ENCODE measurements at regions of chr1 and their contacts with region 1.

Region 1: DNA sequence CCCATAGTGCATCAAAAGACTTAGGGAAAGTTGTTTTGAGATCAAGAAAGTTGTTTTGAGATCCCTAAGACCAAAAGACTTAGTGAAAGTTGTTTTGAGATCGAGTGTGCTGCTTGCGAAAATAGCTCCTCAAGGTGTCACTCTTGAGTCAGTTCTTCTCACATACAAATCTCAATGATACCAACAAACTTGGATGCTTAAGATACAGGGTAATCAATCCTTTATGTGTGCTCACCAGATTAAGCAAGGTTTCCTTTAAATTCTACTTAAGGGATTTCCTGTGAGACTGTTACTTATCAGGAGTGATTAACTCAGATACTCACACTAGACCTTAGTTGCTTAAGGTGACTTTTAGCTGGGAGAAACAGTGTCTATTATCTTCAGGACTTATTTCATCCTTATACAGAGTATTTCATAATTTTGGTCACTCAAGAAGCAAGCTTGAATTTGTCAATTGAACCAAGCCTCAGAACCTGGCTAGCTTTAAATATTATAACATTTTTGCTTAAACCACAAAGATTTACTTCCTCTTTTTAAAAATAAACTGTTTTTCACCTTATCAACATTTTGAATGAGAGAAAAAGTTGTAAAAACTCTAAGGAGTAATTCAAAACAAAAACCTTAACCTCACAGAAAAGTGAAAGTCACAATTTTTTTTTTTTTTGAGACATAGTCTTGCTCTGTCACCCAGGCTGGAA is 8.0 kb upstream of the RLF start:
- DNase-seq: peak; percentile 35
- CTCF ChIP-seq: peak; percentile 74

Region 2: GRCh38 chr1:40171036-40171435 is 17.8 kb after region 1 on chr1:
- CTCF ChIA-PET with region 1: interaction called, 15 read pairs
- POLR2A ChIA-PET with region 1: no interaction called
- DNase-seq: no peak
- CTCF ChIP-seq: no peak

Region 3: GRCh38 chr1:40185951-40186864 is 33.0 kb after region 1 on chr1:
- CTCF ChIA-PET with region 1: interaction called, 27 read pairs
- POLR2A ChIA-PET with region 1: no interaction called
- DNase-seq: peak; percentile 76
- CTCF ChIP-seq: no peak

Region 4: GRCh38 chr1:40210514-40211204 is 57.4 kb after region 1 on chr1:
- CTCF ChIA-PET with region 1: interaction called, 10 read pairs
- POLR2A ChIA-PET with region 1: interaction called, 4 read pairs
- DNase-seq: no peak
- CTCF ChIP-seq: no peak

Region 5: DNA sequence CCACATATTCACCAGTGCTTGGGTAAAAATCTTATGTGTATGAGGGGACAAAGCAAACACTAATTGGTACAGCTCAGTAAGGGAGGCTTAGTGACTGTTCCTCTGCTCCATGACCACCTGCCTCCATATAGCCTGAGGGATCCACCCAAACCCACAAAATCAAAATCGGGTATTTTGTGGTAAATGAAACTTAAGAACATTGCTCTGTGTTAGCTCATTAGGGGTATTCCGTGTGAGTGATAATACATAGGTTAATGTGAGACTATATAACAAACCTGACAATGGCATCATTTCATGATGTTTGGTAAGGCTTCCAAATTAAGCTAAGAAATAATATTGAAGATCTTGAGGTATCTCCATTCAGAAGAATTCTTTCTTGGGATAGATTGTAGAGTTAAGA is 138.1 kb after region 1 on chr1:
- CTCF ChIA-PET with region 1: interaction called, 14 read pairs
- POLR2A ChIA-PET with region 1: interaction called, 3 read pairs
- DNase-seq: no peak
- CTCF ChIP-seq: no peak

Region 6: GRCh38 chr1:40352126-40352525 is 198.9 kb after region 1 on chr1:
- CTCF ChIA-PET with region 1: interaction called, 13 read pairs
- POLR2A ChIA-PET with region 1: no interaction called
- DNase-seq: peak; percentile 52
- CTCF ChIP-seq: no peak

Region 7: DNA sequence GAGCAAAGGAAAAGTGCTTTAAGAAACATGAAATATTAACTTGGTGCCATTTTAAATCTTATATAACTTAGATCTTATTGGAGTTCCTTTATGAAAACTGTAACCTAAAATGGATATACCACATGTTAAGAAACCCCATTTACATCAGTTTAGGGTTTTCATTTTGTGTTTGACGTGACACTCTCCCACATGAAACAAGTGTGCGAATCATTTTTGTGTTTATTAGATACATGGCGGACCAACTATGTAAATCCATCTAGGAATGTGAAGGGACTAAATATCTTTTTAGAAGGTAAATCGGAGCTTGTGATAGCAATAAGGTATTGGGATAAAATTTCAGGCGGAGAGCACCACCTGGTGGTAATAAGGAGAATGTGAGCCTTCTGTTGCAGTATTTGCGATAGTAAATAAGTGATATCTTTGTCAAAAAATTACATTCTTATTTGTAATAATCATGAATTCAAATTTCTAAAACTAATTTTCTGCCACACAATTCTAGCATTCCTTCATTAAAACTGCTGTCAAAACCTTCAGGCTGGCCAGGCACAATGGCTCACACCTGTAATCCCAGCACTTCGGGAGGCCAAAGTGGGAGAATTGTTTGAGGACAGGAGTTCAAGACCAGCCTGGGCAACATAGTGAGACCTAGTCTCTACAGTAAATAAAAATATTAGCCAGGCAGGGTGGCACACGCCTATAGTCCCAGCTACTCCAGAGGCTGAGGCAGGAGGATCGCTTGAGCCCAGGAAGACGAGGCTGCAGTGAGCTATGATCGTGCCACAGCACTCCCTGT is 251.6 kb after region 1 on chr1:
- CTCF ChIA-PET with region 1: interaction called, 44 read pairs
- POLR2A ChIA-PET with region 1: no interaction called
- DNase-seq: no peak
- CTCF ChIP-seq: peak; percentile 69